Natural killer cell (primary cell): ENCODE measurements at regions of chr6 and their contacts with region 1.

Region 1: GRCh38 chr6:118709859-118710350 is 58.5 kb upstream of the CEP85L start:
- DNase-seq: peak; percentile 59 to 91
- ATAC-seq: peak; percentile 83 to 92 (median 91)
- H3K4me3 ChIP-seq: peak overlapping the region; percentile 78
- H3K4me3 Mint-ChIP-seq: peak overlapping the region; percentile 100
- H3K27ac ChIP-seq: peak overlapping the region; percentile 80
- H3K27ac Mint-ChIP-seq: peak overlapping the region; percentile 88 to 91
- H3K4me1 ChIP-seq: peaks cover 38% of the 10 kb centered on the region
- H3K4me1 Mint-ChIP-seq: peaks cover 73% of the 10 kb centered on the region in 2 donors
- H3K27me3 ChIP-seq: no peaks in the 10 kb centered on the region
- H3K27me3 Mint-ChIP-seq: no peaks in the 10 kb centered on the region
- CTCF ChIP-seq: no peak

Region 2: DNA sequence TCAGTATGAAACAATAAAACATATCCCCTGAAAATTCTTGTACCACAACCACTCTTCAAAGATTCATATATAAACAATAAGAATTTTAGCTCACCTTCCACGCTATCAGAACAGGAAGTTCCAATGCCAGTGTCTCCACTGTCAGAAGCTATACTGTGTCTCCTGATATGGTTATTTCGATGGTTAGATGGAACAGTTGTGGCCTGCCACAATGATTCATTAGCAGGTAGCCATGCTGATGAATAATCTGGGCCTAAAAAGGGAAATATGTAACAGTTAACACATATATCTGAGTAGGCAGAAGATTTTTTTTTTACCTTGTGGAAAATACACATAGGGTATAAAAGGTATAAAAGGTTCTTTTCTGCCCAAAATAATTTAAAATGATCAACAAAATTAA is 77.5 kb before region 1 on chr6:
- intact Hi-C with region 1: no loop called
- DNase-seq: no peak
- ATAC-seq: no peak
- H3K4me3 ChIP-seq: no peak overlapping the region
- H3K4me3 Mint-ChIP-seq: no peak overlapping the region
- H3K27ac ChIP-seq: no peak overlapping the region
- H3K27ac Mint-ChIP-seq: no peak overlapping the region
- H3K4me1 ChIP-seq: no peaks in the 10 kb centered on the region
- H3K4me1 Mint-ChIP-seq: peaks cover 43 to 44% of the 10 kb centered on the region in 2 donors
- H3K27me3 ChIP-seq: no peaks in the 10 kb centered on the region
- H3K27me3 Mint-ChIP-seq: no peaks in the 10 kb centered on the region
- CTCF ChIP-seq: no peak

Region 3: DNA sequence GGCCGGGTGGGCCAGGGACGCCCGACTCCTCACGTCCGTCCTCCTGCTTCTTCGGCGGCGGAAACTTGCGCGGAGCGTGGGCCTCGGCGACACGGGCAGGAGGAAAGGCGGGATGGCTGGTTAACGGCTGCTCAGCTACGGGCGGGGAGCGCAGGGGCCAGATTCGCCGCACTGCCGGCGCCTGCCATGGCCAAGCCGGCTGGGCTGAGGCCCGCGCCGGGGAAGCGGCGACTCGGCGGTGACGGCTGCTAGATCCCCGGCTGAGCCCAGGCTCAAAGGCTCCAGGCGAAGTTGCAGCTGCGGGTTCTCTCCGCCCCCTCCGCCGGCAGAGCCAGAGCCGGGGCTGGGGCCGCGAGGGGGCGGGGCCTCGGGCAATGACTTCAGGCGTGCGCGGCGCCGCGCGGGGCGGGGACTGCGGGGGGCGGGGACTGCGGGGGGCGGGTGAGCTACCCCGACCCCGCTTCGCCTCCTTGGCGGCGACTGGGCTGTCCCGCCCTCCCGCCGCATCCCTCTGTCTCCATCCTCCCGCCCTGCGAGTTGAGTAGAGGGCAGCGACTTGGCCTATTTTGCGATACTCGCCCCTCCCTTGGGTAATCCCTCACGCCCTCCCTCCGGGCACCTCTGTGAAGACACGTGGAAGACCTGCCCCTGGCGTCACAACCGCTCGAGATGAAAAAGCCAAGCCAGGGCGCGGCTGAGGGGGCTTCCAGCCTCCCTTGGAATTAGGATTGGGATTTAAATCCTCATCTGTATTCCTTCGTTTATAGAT is 58.4 kb before region 1 on chr6 and contains the start of gene CEP85L:
- intact Hi-C with region 1: loop called (anchors 1 kb)
- DNase-seq: peak; percentile 82 to 95
- ATAC-seq: peak; percentile 88 to 97 (median 89)
- H3K4me3 ChIP-seq: peak within 1 kb of the TSS; percentile 89
- H3K4me3 Mint-ChIP-seq: peak within 1 kb of the TSS; percentile 93
- H3K27ac ChIP-seq: peak within 1 kb of the TSS; percentile 83
- H3K27ac Mint-ChIP-seq: peak within 1 kb of the TSS; percentile 89 to 94
- H3K4me1 ChIP-seq: peaks cover 14% of the 10 kb centered on the region
- H3K4me1 Mint-ChIP-seq: peaks cover 25 to 41% of the 10 kb centered on the region in 2 donors
- H3K27me3 ChIP-seq: no peaks in the 10 kb centered on the region
- H3K27me3 Mint-ChIP-seq: no peaks in the 10 kb centered on the region
- CTCF ChIP-seq: no peak
- total RNA-seq, gene CEP85L: 75.0 to 85.2 (median 82.0) TPM

Region 4: GRCh38 chr6:118680452-118681095 is 29.3 kb before region 1 on chr6:
- intact Hi-C with region 1: loop called (anchors 2 kb)
- DNase-seq: peak in 1 of 2 donors; percentile 33
- ATAC-seq: peak; percentile 72 to 80 (median 77)
- H3K4me3 ChIP-seq: no peak overlapping the region
- H3K4me3 Mint-ChIP-seq: no peak overlapping the region
- H3K27ac ChIP-seq: peak overlapping the region; percentile 58
- H3K27ac Mint-ChIP-seq: peak overlapping the region; percentile 81 to 82
- H3K4me1 ChIP-seq: peaks cover 7% of the 10 kb centered on the region
- H3K4me1 Mint-ChIP-seq: peaks cover 54 to 58% of the 10 kb centered on the region in 2 donors
- H3K27me3 ChIP-seq: no peaks in the 10 kb centered on the region
- H3K27me3 Mint-ChIP-seq: no peaks in the 10 kb centered on the region
- CTCF ChIP-seq: no peak

Region 5: DNA sequence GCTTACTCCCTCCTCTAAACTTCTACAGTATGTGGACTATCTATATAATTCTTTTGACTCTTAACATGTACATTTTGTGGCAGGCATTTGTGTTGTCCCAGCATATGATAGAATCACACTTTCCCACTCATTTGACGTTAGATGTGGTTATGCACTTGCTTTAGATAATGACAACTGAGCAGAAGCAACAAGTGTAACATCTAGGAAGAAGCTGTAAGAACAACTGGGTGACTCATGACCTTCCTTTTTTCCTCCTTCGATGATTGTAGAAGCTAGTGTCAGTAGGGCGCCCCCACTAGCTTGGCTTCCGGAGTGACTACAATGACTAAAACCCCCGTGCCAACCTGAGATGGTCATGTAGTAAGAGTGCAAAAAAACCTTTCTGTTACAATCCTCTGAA is 16.0 kb after region 1 on chr6:
- intact Hi-C with region 1: loop called (anchors 1 kb)
- DNase-seq: peak; percentile 42 to 72
- ATAC-seq: peak; percentile 86 to 93 (median 88)
- H3K4me3 ChIP-seq: no peak overlapping the region
- H3K4me3 Mint-ChIP-seq: no peak overlapping the region
- H3K27ac ChIP-seq: no peak overlapping the region
- H3K27ac Mint-ChIP-seq: peak overlapping the region; percentile 52 to 81
- H3K4me1 ChIP-seq: peaks cover 10% of the 10 kb centered on the region
- H3K4me1 Mint-ChIP-seq: peaks cover 15 to 25% of the 10 kb centered on the region in 2 donors
- H3K27me3 ChIP-seq: no peaks in the 10 kb centered on the region
- H3K27me3 Mint-ChIP-seq: no peaks in the 10 kb centered on the region
- CTCF ChIP-seq: peak; percentile 10

Region 6: DNA sequence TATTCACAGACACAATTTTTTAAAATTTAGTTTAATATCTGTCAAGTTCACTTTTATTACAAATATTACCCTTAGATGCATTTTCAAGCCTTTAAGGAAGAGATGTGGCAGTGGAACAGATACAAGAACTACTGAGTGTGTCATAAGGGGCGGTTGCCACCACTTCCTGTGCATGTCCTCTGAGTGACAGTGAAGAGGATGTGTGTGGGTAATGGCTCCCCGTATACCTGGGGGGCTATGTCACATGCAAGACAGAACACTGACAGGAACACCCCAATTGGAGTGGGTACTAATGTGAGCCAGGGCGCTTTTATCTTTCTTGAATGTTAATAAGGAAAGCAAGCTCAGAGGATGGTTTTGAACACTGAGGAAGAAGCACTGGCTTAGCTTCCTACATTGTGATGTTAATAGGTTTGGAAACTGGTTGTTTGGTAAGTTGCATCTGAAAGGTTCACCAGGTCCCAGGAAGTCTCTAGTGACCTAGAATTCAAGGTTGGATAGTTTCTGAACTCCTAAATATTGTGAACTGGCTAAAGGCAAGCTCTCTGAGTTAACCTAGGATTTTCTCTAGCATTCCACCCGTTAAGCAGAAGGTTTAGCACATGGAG is 100.6 kb after region 1 on chr6:
- intact Hi-C with region 1: loop called (anchors 5 kb)
- DNase-seq: peak; percentile 65 to 84
- ATAC-seq: peak; percentile 83 to 94 (median 86)
- H3K4me3 ChIP-seq: no peak overlapping the region
- H3K4me3 Mint-ChIP-seq: peak overlapping the region; percentile 90
- H3K27ac ChIP-seq: peak overlapping the region; percentile 92
- H3K27ac Mint-ChIP-seq: peak overlapping the region; percentile 96 to 99
- H3K4me1 ChIP-seq: peaks cover 22% of the 10 kb centered on the region
- H3K4me1 Mint-ChIP-seq: peaks cover 54 to 65% of the 10 kb centered on the region in 2 donors
- H3K27me3 ChIP-seq: no peaks in the 10 kb centered on the region
- H3K27me3 Mint-ChIP-seq: no peaks in the 10 kb centered on the region
- CTCF ChIP-seq: no peak

Region 7: DNA sequence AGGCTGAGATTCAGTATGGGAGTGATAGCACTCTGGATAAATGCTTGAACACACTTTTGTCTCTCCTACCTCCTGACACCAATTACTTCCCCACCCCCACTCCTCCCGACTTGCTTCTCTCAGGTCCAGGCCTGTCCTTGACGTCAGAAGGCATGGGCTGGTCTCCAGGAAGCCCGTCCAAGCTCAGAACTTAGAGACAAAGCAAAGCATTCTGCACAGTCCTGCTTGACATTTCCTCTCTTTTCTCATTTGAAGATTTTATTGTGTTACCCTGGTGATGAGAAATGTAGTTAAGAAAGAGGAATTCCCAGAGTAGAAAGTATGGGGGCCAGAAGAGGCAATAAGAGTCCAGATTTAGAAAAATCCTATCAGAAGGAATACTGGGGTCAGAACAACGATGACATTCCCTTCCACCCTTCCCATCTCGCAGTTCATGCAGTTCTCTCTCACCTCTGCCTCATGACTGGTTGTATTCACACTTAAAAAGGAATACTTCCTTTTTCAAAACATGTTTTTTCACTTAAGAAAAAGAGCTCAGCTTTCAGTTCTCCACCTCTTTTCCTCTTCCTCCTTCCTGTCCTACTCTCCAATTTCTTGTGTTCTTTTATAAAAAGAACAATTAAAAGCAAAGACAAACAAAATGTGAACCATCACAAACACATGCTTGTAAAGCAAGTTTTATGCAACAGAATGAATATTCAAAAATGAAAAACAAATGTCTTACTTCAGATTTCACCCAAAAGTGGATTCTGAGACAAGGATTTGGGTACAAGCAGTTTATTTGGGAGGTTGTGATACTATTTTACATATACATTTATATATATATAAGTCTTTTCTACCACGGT is 387.0 kb after region 1 on chr6:
- intact Hi-C with region 1: no loop called
- DNase-seq: no peak
- ATAC-seq: no peak
- H3K4me3 ChIP-seq: no peak overlapping the region
- H3K4me3 Mint-ChIP-seq: no peak overlapping the region
- H3K27ac ChIP-seq: no peak overlapping the region
- H3K27ac Mint-ChIP-seq: no peak overlapping the region
- H3K4me1 ChIP-seq: no peaks in the 10 kb centered on the region
- H3K4me1 Mint-ChIP-seq: peaks cover 5 to 13% of the 10 kb centered on the region in 2 donors
- H3K27me3 ChIP-seq: no peaks in the 10 kb centered on the region
- H3K27me3 Mint-ChIP-seq: no peaks in the 10 kb centered on the region
- CTCF ChIP-seq: no peak